ENCODE measurements at regions of chr12 and their contacts with region 1.

Region 1: DNA sequence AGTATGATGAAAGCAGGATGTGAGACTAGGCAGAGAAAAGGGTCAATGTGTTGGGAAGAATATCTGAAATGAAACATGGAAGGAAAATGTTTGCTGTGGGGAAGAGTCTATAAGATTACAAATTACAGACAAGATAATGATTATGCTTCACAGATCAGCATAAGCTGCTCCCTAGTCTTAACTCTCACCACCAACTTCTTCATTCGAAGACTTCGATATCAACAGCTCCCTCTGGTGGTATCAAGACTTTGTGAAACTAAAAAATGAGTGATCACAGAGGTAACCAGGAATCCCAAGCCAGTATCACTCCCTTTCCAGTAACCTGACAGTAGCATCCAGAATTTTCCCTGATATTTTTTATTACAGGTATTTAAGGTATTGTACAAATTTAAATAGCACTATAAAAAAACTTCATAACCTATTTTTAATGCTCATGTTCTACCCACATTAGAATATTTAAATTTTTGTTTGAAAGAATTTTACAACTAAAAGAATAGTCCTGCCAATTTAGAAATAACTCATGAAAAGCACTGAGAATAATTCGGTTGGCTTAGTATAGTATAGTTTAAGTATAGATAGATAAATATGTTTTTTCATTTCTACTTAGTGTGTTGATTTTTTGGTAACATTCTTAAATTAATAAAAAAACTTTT is 84.4 kb downstream of the C2CD5 start:
- DNase-seq: no peak
- H3K4me3 ChIP-seq: no peak overlapping the region
- H3K27ac ChIP-seq: no peak overlapping the region
- H3K4me1 ChIP-seq: no peaks in the 10 kb centered on the region
- H3K27me3 ChIP-seq: no peaks in the 10 kb centered on the region
- CTCF ChIP-seq: peak; percentile 15 to 45 (median 29)
- POLR2A ChIP-seq: no peak

Region 2: GRCh38 chr12:21773263-21773741 is 686.7 kb before region 1 on chr12:
- intact Hi-C with region 1: no loop called
- DNase-seq: no peak
- H3K4me3 ChIP-seq: peak overlapping the region; percentile 60 to 72
- H3K27ac ChIP-seq: peak overlapping the region; percentile 82
- H3K4me1 ChIP-seq: peaks cover 7% of the 10 kb centered on the region
- H3K27me3 ChIP-seq: no peaks in the 10 kb centered on the region
- CTCF ChIP-seq: no peak
- POLR2A ChIP-seq: no peak

Region 3: DNA sequence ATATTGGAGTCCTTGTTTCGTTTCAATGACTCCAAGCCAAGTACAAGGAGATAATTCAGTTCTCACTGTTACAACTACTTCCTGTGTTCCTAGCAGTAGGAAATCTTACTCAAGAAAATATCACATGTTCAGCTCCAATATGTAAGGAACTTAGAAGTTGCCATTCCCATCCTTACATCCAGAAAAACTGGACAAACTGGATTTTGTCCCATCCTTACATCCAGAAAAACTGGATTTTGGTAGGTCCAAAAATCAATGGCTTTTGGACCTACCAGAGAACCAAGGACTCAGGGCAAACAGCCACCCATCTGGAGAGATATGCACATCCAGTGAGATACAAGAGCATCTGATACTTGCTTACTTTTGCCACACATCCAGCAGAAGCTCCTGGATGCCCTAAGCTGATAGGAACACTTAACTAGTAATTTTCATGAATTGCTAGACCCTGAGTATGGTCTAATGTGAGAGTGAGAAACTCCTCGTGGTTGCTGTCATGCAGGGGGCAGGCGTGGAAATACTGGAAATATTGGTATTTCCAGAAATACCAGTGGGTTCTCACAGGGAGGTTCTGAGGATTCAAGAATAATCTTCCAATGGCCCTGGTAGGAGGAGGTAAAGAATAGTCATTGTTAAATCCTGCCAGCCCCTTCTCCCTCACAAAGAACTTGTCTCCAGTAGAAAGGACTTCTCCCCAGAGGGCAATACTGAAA is 390.0 kb before region 1 on chr12:
- intact Hi-C with region 1: loop called (anchors 10 kb)
- DNase-seq: no peak
- H3K4me3 ChIP-seq: no peak overlapping the region
- H3K27ac ChIP-seq: no peak overlapping the region
- H3K4me1 ChIP-seq: no peaks in the 10 kb centered on the region
- H3K27me3 ChIP-seq: no peaks in the 10 kb centered on the region
- CTCF ChIP-seq: no peak
- POLR2A ChIP-seq: no peak

Region 4: DNA sequence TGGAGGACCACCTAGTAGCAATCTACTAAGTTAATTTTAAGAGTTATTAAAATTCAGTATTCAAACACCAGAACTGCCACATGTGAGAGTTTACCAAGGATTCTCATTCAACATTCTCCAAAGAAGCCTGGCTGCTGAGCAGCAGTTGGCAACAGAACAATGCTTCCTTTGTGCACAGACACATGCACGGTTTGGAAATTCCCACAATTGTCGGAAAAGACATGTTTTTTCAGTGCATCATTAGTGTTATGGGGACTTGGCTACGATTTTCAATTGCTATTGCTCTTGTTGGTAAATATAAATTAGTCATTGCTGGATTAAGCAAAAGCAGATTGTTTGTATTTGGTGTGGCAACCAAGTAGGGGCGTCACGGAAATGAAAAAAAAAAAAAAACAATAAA is 147.6 kb before region 1 on chr12:
- intact Hi-C with region 1: no loop called
- DNase-seq: no peak
- H3K4me3 ChIP-seq: no peak overlapping the region
- H3K27ac ChIP-seq: no peak overlapping the region
- H3K4me1 ChIP-seq: peaks cover 11% of the 10 kb centered on the region
- H3K27me3 ChIP-seq: no peaks in the 10 kb centered on the region
- CTCF ChIP-seq: no peak
- POLR2A ChIP-seq: no peak

Region 5: DNA sequence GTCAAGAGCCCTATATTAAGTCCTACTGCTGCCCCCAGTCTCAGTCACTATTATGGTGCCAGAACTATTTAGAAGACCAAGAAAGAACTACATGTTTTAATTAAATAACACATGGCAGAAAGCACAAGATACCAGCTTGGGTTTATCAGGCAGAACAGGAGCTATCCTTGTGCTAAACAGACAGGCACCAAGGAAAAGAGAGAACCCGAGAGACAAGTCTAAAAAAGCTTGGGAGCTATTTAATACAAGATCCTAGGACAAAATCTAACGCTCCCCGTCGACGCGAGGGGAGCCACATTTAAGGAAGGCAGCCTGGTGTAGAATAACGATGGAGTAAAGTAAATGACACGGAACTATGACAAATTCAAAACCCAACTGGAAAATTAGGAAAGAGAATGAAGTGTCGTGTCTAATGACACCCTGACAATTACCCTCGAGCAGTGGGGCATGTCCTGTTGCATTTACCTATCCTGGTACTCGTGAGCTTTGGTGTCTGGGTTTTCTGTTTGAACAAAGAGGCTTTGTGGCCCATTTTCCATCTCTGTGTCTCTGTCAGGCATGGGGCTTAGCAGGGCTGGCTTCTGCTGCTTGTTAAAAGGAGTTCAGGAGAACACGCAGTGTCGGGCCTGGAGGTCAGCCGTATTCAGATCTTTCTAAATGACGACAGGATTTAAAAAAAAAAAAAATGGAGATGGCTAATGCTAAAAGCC is 305.6 kb after region 1 on chr12:
- intact Hi-C with region 1: no loop called
- DNase-seq: no peak
- H3K4me3 ChIP-seq: no peak overlapping the region
- H3K27ac ChIP-seq: no peak overlapping the region
- H3K4me1 ChIP-seq: no peaks in the 10 kb centered on the region
- H3K27me3 ChIP-seq: no peaks in the 10 kb centered on the region
- CTCF ChIP-seq: no peak
- POLR2A ChIP-seq: no peak